Activated CD4-positive, alpha-beta T cell treated with anti-CD3 and anti-CD28 coated beads, Interleukin-2, amount 10 ng/mL, durations not matched to agents 24 days and 14 days (primary cell): ENCODE measurements at regions of chr10 and their contacts with region 1.

Region 1: DNA sequence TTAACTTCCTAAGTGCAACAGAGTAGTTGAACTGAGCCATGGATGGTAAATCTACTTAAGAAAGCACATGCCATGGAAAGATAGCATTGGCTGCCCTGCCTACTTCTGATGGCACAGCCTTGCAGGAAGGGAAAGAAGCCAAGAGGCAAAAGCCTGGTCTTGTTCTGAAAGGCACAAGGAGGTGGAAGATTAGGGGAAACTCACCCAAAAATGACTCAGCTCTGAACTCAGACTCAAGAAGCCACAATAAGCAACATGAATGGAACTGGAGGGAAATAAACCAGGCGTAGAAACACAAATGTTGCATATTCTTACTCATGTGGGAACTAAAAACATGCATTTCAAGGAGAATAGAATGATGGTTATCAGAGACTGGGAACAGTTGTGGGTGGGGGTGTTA is 20.8 kb upstream of the ALOX5 start:
- DNase-seq: no peak
- H3K4me3 Mint-ChIP-seq: no peak overlapping the region
- H3K27ac Mint-ChIP-seq: peak overlapping the region; percentile 65
- H3K4me1 Mint-ChIP-seq: peaks cover 20% of the 10 kb centered on the region
- H3K27me3 Mint-ChIP-seq: peaks cover 13% of the 10 kb centered on the region

Region 2: DNA sequence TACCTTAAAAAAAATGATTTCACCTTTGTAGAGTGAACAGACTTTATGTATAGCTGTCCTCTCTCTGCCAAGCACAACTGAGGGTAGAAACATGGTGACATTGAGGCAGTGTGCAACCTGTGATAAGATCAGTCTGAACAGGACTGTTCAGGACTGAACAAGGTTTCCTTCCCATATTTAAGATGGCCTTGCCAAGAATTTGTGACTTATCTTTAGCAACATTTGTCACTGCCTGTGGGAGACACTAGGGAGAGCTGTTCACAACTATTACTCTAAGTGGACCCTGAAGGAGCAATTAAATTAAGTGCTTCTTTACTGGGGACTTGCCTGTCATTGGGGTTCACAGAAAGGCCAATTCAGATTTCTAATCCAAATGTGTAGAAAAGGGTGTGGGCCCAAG is 44.5 kb before region 1 on chr10:
- intact Hi-C with region 1: no loop called
- DNase-seq: peak; percentile 58
- H3K4me3 Mint-ChIP-seq: no peak overlapping the region
- H3K27ac Mint-ChIP-seq: no peak overlapping the region
- H3K4me1 Mint-ChIP-seq: no peaks in the 10 kb centered on the region
- H3K27me3 Mint-ChIP-seq: peaks cover 40% of the 10 kb centered on the region

Region 3: GRCh38 chr10:45373576-45374349 is 20.6 kb after region 1 on chr10 and contains the start of gene ALOX5:
- intact Hi-C with region 1: loop called (anchors 2 kb)
- DNase-seq: peak; percentile 88
- H3K4me3 Mint-ChIP-seq: peak within 1 kb of the TSS; percentile 93
- H3K27ac Mint-ChIP-seq: peak within 1 kb of the TSS; percentile 79
- H3K4me1 Mint-ChIP-seq: peaks cover 28% of the 10 kb centered on the region
- H3K27me3 Mint-ChIP-seq: peaks cover 65% of the 10 kb centered on the region
- total RNA-seq, gene ALOX5: 1.0 and 2.4 TPM in 2 replicates

Region 4: DNA sequence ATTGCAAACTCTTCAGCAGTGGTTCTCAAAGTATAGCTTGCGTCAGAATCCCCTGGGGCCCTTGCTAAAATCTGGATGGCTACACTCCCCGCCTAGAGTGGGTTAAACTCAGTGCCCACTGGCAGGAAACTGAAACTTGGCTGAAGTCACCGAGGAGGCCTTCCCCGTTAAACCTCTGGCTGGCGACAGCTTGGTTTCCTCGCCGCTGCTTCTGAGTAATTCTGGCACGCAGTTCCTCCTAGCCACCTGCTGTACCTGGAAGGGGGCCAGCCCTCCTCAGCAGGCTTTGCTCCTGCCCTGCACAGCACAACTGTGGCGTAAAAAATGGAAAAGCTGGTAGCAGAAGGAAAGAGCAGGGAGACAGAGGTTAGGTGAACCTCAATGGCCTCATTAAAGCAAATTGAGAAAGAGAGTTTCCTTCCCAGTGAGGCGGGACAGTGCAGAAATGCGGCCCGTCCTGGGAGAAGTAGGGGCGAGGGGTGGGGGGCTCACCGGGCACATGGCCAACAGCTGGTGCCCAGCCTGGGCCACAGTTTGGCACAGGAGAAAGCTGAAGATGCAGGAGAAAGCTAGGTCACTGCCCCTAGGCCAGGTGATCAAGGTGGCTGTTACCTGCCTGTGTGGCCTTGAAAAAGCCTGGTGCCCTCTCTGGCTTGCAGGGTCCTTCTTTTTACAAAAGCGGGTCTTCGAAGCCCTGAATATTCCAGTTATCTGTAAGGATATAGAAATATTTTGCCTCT is 67.4 kb after region 1 on chr10:
- intact Hi-C with region 1: loop called (anchors 2 kb)
- DNase-seq: peak; percentile 89
- H3K4me3 Mint-ChIP-seq: peak overlapping the region; percentile 98
- H3K27ac Mint-ChIP-seq: peak overlapping the region; percentile 99
- H3K4me1 Mint-ChIP-seq: peaks cover 73% of the 10 kb centered on the region
- H3K27me3 Mint-ChIP-seq: no peaks in the 10 kb centered on the region

Region 5: DNA sequence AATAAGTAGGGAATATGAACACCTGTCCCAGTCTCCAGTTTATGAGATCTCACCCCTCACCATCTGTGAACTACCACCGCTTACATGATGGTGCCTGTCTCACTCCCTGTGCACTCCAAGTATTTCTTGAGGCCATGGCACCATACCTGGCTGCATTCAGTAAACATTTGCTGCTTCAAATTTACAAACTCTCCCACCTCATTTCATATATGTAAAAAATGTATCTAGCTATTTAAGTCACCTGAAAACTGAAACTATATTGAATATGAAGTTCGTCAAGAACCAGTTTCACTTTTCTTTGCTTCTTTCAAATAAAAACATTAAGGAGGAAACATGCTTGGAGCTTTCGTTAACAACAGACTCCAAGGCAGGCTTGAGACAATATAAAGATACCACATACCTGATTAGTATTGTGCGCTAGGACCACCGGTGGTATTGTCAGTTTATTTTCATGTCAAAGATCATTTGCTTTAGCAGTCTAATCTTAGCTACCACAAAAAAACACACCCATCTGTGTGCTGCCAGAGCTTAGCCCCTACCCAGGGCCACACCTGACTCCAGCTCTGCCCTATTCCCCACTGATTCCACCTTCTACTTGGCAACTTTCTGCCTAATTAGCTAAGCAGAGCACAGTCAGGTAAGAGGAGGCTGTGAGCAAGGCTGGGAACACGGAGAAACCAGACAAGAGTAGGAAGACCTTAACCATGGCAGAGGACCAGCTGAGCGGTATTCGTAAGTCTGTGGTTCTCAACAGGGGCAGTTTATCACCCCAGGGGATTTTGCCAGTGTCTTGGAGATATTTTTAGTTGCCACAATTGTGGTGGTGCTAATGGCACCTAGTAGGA is 227.4 kb after region 1 on chr10:
- intact Hi-C with region 1: loop called (anchors 2 kb)
- DNase-seq: peak; percentile 72
- H3K4me3 Mint-ChIP-seq: peak overlapping the region; percentile 78
- H3K27ac Mint-ChIP-seq: peak overlapping the region; percentile 83
- H3K4me1 Mint-ChIP-seq: peaks cover 26% of the 10 kb centered on the region
- H3K27me3 Mint-ChIP-seq: peaks cover 3% of the 10 kb centered on the region